ENCODE measurements at regions of chr3 and their contacts with region 1.

Region 1: DNA sequence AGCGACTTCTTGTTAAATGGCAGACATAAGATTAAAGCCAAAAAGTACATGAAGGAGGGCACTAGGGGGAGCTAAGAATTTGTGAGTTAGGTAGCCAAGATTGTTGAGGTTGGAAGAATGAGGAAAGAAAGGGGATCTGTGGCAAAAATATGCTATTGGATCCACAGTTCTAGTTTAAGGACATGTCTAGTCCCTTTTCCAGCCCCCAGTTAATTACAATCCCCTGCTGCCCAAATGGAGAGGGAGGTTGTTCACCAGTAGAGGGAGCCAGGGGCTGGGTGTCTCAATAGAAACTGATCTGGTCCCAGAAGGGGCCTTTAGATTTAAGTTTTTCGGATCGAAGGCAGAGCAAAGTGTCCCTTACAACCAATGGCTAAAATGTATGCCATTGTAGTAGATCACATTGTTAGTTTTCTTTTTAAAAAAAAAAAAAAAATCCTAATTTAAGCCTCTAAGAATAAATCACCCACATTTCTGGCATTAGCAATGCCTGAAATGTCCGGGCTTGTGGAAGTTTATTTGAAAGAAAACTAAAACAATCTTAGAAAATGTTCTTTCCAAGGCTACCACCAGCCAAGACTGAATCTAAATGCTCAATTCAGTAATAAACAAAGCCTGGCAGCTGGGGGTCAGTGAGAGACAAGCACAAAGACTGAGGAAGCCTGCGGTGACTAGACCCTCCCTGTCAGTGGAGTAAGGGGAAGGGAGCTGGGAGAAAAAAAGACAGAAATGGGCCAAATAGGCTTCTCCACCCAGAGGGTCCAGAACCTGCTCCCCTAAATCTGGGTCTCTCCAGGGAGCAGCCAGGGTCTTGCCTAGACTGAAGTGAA is 7.1 kb downstream of the COL8A1 start:
- DNase-seq: no peak
- H3K4me3 ChIP-seq: no peak overlapping the region
- H3K27me3 ChIP-seq: no peaks in the 10 kb centered on the region
- CTCF ChIP-seq: peak; percentile 53

Region 2: GRCh38 chr3:99429502-99429901 is 216.0 kb before region 1 on chr3:
- CTCF ChIA-PET with region 1: no interaction called
- POLR2A ChIA-PET with region 1: no interaction called
- DNase-seq: no peak
- H3K4me3 ChIP-seq: no peak overlapping the region
- H3K27me3 ChIP-seq: no peaks in the 10 kb centered on the region
- CTCF ChIP-seq: no peak

Region 3: DNA sequence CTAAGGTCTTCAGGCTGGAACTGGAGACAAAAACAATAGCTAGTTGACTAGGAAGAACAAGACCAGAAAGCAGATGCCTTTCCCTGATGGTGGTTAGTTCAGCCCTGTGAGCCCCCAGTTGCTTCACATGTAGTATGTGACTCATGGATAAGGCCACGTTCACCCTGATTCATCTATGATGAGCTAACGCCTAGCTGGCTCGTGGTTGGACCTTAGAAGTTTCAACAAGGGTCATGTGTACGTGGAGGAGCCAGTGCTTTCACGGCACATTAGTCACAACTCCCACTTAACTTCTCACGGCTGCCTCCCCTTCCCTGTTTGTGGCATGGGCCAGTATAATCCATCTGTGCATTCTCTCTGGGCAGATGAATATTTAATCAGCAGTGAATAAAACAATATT is 13.5 kb after region 1 on chr3:
- CTCF ChIA-PET with region 1: interaction called, 20 read pairs
- POLR2A ChIA-PET with region 1: interaction called, 4 read pairs
- DNase-seq: peak; percentile 93
- H3K4me3 ChIP-seq: no peak overlapping the region
- H3K27me3 ChIP-seq: no peaks in the 10 kb centered on the region
- CTCF ChIP-seq: no peak

Region 4: GRCh38 chr3:99799420-99799819 is 153.9 kb after region 1 on chr3:
- CTCF ChIA-PET with region 1: no interaction called
- POLR2A ChIA-PET with region 1: no interaction called
- DNase-seq: no peak
- H3K4me3 ChIP-seq: no peak overlapping the region
- H3K27me3 ChIP-seq: no peaks in the 10 kb centered on the region
- CTCF ChIP-seq: no peak

Measured in BJ (cell line).